ENCODE measurements at regions of chr20 and their contacts with region 1.

Region 1: DNA sequence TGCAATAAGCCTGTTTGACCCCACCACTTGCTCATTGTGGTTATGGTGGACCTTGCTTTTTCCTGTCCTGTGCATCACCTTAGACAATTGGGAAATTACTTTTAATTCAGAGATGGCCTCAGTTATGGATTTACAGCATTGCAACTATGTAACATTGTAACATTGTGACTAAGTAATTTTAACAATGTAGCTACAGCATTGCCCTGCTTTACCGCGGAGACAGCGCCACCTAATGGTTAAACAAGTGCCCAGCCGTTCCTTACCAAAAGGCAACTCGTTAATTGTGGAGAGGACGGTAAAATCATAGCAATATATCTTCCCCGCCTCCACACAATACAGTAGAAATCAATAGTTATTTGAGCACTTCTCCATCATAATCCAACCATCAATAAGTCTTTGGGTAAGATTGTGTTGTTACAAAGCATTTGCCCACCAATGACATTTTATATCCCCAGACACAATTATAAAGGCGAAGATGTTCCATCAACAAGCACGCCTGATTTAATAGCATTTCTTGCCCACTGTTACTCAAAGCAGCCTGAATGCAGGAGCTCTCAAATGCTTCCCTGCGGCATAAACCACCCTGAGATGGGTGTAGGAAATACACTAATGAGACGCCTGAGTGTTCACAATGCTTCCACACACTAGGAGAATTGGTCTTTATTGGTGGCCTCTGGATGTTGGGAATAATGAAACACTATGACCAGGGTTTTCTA is 93.7 kb downstream of the PROKR2 start:
- DNase-seq: peak; percentile 72
- CTCF ChIP-seq: peak; percentile 95

Region 2: GRCh38 chr20:5168651-5169396 is 54.3 kb before region 1 on chr20:
- CTCF ChIA-PET with region 1: interaction called, 15 read pairs
- POLR2A ChIA-PET with region 1: no interaction called
- DNase-seq: no peak
- CTCF ChIP-seq: no peak

Region 3: DNA sequence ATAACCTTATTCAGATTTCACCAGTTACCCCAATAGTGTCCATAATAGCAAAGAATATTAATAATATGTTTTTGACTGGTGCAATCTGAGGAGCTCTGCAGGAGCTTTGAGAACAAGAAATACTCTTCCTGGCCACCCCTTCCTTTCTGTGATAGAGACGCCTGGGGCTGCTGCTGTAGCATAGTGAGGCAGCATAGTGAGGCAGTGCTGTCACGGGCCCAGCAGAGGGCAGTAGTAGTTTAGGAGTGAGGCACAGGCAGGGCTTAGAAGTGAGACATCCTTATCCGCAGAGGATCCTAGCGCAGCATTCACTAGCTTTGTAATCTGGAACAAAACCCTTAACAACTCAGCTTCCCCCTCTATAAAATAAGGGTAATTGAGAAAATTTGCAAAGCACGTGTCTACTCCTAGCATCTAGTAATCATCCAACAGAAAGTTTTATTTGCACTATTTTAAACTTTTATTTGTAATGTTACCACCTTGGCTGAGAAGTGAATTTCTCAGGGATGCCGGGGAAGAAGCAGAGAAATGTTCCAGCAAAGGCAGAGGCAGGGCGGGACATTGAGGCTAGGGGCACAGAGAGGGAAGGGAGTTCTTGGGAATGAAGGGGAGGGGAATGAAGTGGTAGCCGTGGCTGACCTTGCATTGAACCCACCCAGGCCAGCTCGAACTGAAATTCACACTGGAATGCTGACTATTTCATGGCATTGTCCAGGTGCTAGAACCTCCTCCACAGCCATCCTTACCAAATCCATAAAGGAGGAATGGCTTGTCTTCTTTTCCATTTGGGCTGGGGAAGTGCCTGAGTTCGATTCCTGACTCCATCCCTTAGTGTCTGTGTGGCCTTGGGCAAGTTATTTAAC is 17.5 kb before region 1 on chr20:
- CTCF ChIA-PET with region 1: interaction called, 126 read pairs
- POLR2A ChIA-PET with region 1: no interaction called
- DNase-seq: peak; percentile 83
- CTCF ChIP-seq: peak; percentile 94

Region 4: DNA sequence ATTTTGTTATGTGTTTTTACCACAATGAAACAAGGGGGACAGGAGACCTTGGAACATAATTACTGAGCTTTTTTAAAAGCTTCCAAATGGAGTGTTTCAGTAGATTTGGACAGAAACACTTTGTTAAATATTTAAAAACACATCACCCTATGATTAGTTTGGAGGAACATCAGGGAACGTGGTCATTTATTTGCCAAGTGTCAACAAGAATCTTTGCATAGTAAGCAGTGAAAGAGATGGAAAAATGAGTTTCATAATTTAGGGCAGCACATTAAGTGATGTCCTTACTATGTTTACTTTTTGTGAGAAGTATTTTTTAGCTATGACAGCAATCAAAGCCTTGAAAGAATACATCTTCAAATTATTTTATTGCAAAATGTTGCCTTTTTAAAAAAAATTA is 11.1 kb after region 1 on chr20:
- CTCF ChIA-PET with region 1: interaction called, 16 read pairs
- POLR2A ChIA-PET with region 1: no interaction called
- DNase-seq: no peak
- CTCF ChIP-seq: no peak

Measured in GM10248 (cell line).